GM12878 (cell line): ENCODE measurements at regions of chr10 and their contacts with region 1.

Region 1: DNA sequence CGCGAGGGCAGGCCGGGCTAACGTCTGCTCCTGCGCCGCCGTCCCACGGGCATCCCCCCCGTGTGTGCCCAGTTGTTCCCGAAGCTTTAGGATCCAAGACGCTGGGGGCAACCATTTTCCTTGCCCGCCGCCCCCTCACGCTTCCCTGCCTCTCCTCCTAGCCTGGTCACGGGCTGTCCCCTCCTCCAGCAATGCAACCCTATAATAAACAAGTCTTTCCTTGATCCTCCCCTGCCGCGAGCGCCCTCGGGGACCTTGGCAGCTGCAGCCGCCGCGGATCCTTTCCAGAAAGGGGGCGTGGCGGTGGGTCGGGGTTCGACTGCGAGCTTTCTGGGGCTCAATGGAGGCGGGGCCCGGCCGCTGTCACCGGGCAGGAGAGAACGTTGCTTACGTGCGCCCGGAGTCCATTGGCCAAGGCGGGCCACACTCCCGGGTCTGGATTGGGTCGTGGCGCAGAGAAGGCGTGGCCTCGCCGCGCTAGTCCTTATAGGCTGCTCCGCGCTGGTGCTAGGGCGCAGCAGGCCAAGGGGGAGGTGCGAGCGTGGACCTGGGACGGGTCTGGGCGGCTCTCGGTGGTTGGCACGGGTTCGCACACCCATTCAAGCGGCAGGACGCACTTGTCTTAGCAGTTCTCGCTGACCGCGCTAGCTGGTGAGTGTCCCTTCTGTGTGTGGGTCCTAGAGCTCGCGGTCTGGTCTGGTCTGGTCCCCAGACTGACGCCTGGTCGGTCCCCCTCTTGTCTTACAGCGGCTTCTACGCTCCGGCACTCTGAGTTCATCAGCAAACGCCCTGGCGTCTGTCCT is at the start of gene DDIT4:
- DNase-seq: peak; percentile 97
- ATAC-seq: peak; percentile 89
- H3K4me3 ChIP-seq: peak within 1 kb of the TSS; percentile 92
- H3K27ac ChIP-seq: peak within 1 kb of the TSS; percentile 96
- H3K4me1 ChIP-seq: peaks cover 12% of the 10 kb centered on the region
- H3K27me3 ChIP-seq: no peaks in the 10 kb centered on the region
- CTCF ChIP-seq: no peak
- EP300 ChIP-seq: 0 out of 4 replicates have a peak, but pooled peaks have one; percentile 37 to 39
- POLR2A ChIP-seq: peak; percentile 100
- RAD21 ChIP-seq: 0 out of 2 replicates have a peak, but pooled peaks have one; percentile 16
- polyA plus RNA-seq, gene DDIT4: 2.1 to 5.0 TPM

Region 2: DNA sequence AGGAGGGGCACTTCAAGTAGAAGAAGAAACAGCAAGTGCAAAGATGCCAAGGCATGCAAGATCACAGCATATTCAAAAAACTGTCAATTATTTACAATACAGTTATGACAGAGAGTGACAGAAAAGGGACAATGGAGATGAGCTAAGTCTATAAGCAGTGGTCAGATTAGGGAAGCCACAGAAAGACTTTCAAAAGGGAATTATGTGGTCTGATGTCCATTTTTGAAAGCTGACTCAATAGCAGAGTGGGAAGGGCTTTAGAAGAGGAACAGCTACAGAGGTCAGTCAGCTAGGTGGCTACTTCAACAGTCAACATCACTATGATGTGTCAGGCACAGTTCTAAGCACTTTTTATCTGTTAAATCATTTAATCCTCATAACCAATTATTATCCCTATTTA is 140.1 kb before region 1 on chr10:
- CTCF ChIA-PET with region 1: interaction called, 10 read pairs
- POLR2A ChIA-PET with region 1: interaction called, 5 read pairs
- RAD21 ChIA-PET with region 1: interaction called, 33 read pairs
- SMC1A ChIA-PET with region 1: interaction called, 28 read pairs
- in situ Hi-C with region 1: no loop called
- intact Hi-C with region 1: no loop called
- DNase-seq: peak; percentile 92
- ATAC-seq: peak; percentile 91
- H3K4me3 ChIP-seq: 0 out of 2 replicates have a peak overlapping the region, but pooled peaks have one; percentile 4
- H3K27ac ChIP-seq: peak overlapping the region; percentile 75
- H3K4me1 ChIP-seq: peaks cover 42% of the 10 kb centered on the region
- H3K27me3 ChIP-seq: no peaks in the 10 kb centered on the region
- CTCF ChIP-seq: no peak
- EP300 ChIP-seq: peak; percentile 84 to 96; a peak in 3 of 4 replicates
- POLR2A ChIP-seq: no peak
- RAD21 ChIP-seq: no peak

Region 3: DNA sequence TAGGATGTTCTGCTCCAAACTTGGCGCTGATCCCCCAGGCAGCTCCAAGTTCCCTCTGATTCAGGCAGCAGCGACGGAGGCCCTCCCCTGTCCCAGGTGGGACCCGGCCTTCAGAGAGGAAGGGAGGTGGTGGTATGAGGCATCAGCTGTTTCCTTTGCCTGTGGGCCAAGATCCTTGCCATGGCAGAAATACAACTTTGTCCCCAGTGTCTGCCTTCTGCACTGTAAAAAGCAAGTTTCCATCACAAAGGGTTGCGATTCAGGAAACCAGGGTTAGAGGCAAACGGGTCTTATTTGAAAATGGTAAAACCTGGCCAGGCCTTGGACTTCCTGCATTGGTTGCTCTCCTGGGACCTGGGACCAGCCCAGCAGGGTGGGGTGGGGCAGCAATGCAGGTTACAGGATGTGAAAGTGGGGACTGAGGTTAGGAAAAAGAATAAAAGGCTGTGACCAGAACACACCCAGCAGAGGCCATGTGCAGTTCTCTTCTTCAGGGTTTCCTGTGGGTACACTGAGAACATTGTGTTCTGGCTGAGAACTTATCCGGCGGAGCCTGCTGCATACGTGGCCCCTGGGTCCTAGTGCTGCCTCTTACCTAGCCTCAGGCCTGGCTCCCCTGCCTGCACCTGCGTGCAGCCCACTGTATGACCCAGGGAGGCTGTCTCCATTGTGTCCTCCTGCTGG is 25.0 kb before region 1 on chr10:
- CTCF ChIA-PET with region 1: interaction called, 15 read pairs
- POLR2A ChIA-PET with region 1: interaction called, 33 read pairs
- RAD21 ChIA-PET with region 1: interaction called, 200 read pairs
- SMC1A ChIA-PET with region 1: interaction called, 275 read pairs
- in situ Hi-C with region 1: no loop called
- intact Hi-C with region 1: loop called (anchors 1 kb)
- DNase-seq: peak; percentile 99
- ATAC-seq: peak; percentile 95
- H3K4me3 ChIP-seq: peak overlapping the region; percentile 55; the same call in 1 of the 2 replicates
- H3K27ac ChIP-seq: peak overlapping the region; percentile 97
- H3K4me1 ChIP-seq: peaks cover 72% of the 10 kb centered on the region
- H3K27me3 ChIP-seq: no peaks in the 10 kb centered on the region
- CTCF ChIP-seq: no peak
- EP300 ChIP-seq: peak; percentile 88 to 91
- POLR2A ChIP-seq: peak; percentile 89
- RAD21 ChIP-seq: no peak

Region 4: DNA sequence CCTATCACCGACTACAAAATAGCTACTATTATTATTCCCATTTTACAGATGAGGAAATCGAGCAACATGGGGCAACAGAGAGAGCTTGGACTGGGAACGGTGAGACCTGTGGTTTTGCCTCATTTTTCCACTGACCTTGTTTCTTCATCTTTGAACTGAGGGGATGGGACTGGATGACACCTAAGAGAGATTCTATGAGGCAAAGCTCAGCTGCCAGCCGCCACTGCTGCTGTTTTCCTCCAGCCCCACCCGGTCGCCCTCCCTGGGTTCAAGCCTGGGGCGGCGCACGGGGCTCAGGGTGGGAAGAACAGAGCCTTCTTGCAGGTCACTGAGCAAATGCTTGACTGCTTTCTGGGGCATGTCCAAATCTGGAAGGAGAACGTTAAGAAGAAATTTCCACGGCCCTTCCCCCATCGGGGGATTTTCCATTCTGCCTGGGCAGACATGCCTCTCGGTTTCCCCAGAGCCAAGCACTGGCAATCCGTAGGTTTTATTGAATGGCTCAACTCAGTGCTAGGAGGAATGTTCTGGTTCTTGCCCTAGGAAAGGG is 12.4 kb after region 1 on chr10:
- CTCF ChIA-PET with region 1: interaction called, 27 read pairs
- POLR2A ChIA-PET with region 1: interaction called, 36 read pairs
- RAD21 ChIA-PET with region 1: interaction called, 8 read pairs
- SMC1A ChIA-PET with region 1: interaction called, 43 read pairs
- in situ Hi-C with region 1: no loop called
- intact Hi-C with region 1: no loop called
- DNase-seq: no peak
- ATAC-seq: peak; percentile 62
- H3K4me3 ChIP-seq: 0 out of 2 replicates have a peak overlapping the region, but pooled peaks have one; percentile 20
- H3K27ac ChIP-seq: peak overlapping the region; percentile 55
- H3K4me1 ChIP-seq: peaks cover 20% of the 10 kb centered on the region
- H3K27me3 ChIP-seq: no peaks in the 10 kb centered on the region
- CTCF ChIP-seq: no peak
- EP300 ChIP-seq: no peak
- POLR2A ChIP-seq: no peak
- RAD21 ChIP-seq: no peak

Region 5: DNA sequence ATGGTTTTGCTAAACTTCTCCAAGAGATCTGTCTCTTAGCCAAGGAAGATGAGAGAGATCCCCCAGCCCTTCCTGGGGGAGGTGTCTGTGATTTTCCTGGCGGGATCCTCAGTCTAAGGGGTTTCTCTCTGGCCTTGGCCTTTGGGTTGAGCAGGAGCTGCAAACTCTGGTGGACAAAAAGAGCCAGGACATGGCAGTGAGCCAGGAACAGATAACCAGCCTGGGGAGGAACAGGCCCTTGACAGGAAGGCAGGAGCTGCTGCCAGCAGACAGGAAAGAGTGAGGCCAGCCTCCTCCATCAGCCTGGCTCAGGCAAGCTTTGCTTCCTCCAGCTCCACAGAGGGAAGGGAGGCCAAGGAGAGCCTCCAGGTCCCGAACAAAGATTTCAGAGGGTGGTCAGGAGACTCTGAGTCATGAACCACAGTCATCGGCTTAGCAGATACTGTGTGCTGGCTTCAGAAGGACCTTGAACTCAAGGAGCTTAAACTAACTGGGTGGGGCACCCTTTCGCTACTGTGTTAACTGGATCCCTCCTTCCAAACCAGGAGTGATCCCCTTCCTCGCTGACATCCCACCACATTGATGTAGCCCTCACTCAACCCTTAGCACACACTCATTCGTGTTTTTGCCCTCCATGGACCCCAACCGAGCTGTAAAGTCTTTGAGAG is 34.8 kb after region 1 on chr10:
- CTCF ChIA-PET with region 1: interaction called, 4 read pairs
- POLR2A ChIA-PET with region 1: interaction called, 6 read pairs
- RAD21 ChIA-PET with region 1: no interaction called
- SMC1A ChIA-PET with region 1: interaction called, 10 read pairs
- in situ Hi-C with region 1: no loop called
- intact Hi-C with region 1: no loop called
- DNase-seq: no peak
- ATAC-seq: peak; percentile 32
- H3K4me3 ChIP-seq: no peak overlapping the region
- H3K27ac ChIP-seq: no peak overlapping the region
- H3K4me1 ChIP-seq: peaks cover 14% of the 10 kb centered on the region
- H3K27me3 ChIP-seq: no peaks in the 10 kb centered on the region
- CTCF ChIP-seq: no peak
- EP300 ChIP-seq: no peak
- POLR2A ChIP-seq: no peak
- RAD21 ChIP-seq: no peak

Region 6: GRCh38 chr10:72659694-72660093 is 386.1 kb after region 1 on chr10:
- CTCF ChIA-PET with region 1: no interaction called
- POLR2A ChIA-PET with region 1: interaction called, 11 read pairs
- RAD21 ChIA-PET with region 1: no interaction called
- SMC1A ChIA-PET with region 1: no interaction called
- in situ Hi-C with region 1: no loop called
- intact Hi-C with region 1: no loop called
- DNase-seq: no peak
- ATAC-seq: no peak
- H3K4me3 ChIP-seq: no peak overlapping the region
- H3K27ac ChIP-seq: no peak overlapping the region
- H3K4me1 ChIP-seq: no peaks in the 10 kb centered on the region
- H3K27me3 ChIP-seq: no peaks in the 10 kb centered on the region
- CTCF ChIP-seq: no peak
- EP300 ChIP-seq: no peak
- POLR2A ChIP-seq: no peak
- RAD21 ChIP-seq: no peak